ENCODE measurements at regions of chr6 and their contacts with region 1.

Region 1: GRCh38 chr6:83057705-83058321 is 7.8 kb downstream of the UBE3D start:
- DNase-seq: peak; percentile 37
- H3K4me3 ChIP-seq: no peak overlapping the region
- H3K27ac ChIP-seq: no peak overlapping the region
- H3K4me1 ChIP-seq: no peaks in the 10 kb centered on the region
- H3K27me3 ChIP-seq: no peaks in the 10 kb centered on the region
- CTCF ChIP-seq: peak; percentile 78 to 81

Region 2: DNA sequence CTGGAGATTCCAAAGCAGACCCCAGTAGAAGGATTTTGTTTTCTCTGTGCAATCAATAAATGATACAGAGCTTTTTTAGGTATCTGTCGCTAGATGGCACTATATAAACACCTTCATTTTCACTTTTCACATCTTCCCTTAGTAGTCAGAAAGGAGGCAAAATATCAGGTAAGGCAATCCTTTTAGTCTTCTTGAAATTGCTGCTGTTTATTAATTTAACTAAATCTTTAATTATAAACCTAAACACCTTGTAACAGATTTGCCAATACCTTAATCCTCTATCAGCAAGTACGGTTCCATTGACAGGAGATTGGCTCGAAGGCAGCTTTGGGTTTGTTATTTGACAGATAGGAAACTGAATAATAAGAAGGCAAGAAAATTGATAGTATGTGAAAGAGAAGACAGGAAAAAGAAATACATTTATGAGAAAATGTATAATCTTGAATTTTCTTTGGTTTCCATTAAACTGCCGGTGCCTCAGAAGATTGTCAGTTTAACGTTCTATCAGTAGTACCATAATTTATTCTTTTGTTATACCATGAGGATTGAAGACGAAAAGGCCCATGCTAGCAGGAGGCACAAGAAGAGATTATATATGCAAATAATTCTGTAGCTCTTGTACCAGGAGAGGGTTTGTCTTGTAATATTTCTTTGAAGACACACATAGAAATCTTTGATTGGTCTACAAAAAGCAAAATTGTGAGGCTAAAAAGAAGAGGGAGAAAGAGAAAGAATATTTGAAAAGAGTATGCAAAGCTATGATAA is 786.8 kb before region 1 on chr6:
- CTCF ChIA-PET with region 1: interaction called, 3 read pairs
- dilution Hi-C with region 1: no loop called
- in situ Hi-C with region 1: loop called in 1 of 2 experiments (anchors 5 kb)
- intact Hi-C with region 1: loop called (anchors 1 kb)
- DNase-seq: peak; percentile 21
- H3K4me3 ChIP-seq: no peak overlapping the region
- H3K27ac ChIP-seq: no peak overlapping the region
- H3K4me1 ChIP-seq: peaks cover 15% of the 10 kb centered on the region
- H3K27me3 ChIP-seq: no peaks in the 10 kb centered on the region
- CTCF ChIP-seq: peak; percentile 54 to 60

Region 3: DNA sequence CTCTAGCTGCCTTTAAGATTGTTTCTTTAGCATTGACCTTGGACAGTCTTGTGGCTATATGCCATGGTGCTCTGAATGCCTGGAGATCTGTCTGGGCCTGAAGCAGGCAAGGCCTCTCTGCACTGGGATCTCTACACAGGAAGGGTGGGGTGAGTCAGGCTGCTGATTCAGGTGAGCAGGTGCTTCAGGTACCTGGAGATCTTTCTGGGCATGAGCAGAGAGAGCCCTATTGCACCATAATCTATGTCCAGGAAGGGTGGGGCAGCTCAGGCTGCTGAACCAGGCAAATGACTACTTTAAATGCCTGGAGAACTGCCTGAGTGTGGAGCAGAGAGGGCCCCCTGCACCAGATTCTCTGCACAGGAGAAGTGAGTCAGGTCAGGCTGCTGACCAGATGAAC is 599.7 kb before region 1 on chr6:
- CTCF ChIA-PET with region 1: no interaction called
- dilution Hi-C with region 1: no loop called
- in situ Hi-C with region 1: no loop called
- intact Hi-C with region 1: loop called (anchors 5 kb)
- DNase-seq: peak; percentile 99
- H3K4me3 ChIP-seq: no peak overlapping the region
- H3K27ac ChIP-seq: peak overlapping the region; percentile 58
- H3K4me1 ChIP-seq: peaks cover 17% of the 10 kb centered on the region
- H3K27me3 ChIP-seq: no peaks in the 10 kb centered on the region
- CTCF ChIP-seq: no peak

Region 4: GRCh38 chr6:82589509-82590206 is 468.2 kb before region 1 on chr6:
- CTCF ChIA-PET with region 1: no interaction called
- dilution Hi-C with region 1: no loop called
- in situ Hi-C with region 1: no loop called
- intact Hi-C with region 1: loop called (anchors 2 kb)
- DNase-seq: peak; percentile 58
- H3K4me3 ChIP-seq: no peak overlapping the region
- H3K27ac ChIP-seq: no peak overlapping the region
- H3K4me1 ChIP-seq: peaks cover 2% of the 10 kb centered on the region
- H3K27me3 ChIP-seq: no peaks in the 10 kb centered on the region
- CTCF ChIP-seq: peak; percentile 36 to 41

Region 5: GRCh38 chr6:82712852-82713251 is 345.0 kb before region 1 on chr6:
- CTCF ChIA-PET with region 1: no interaction called
- dilution Hi-C with region 1: no loop called
- in situ Hi-C with region 1: no loop called
- intact Hi-C with region 1: loop called (anchors 2 kb)
- DNase-seq: no peak
- H3K4me3 ChIP-seq: no peak overlapping the region
- H3K27ac ChIP-seq: no peak overlapping the region
- H3K4me1 ChIP-seq: no peaks in the 10 kb centered on the region
- H3K27me3 ChIP-seq: no peaks in the 10 kb centered on the region
- CTCF ChIP-seq: peak; percentile 51

Measured in mammary epithelial cell (primary cell).